HepG2 (cell line): ENCODE measurements at regions of chr1 and their contacts with region 1.

Region 1: GRCh38 chr1:150979092-150980056 is 2.7 kb upstream of the ANXA9 start:
- DNase-seq: peak; percentile 82
- ATAC-seq: peak; percentile 16
- H3K4me3 ChIP-seq: peak overlapping the region; percentile 46 to 73 (median 50)
- H3K27ac ChIP-seq: peak overlapping the region; percentile 38
- H3K4me1 ChIP-seq: peaks cover 82% of the 10 kb centered on the region
- H3K27me3 ChIP-seq: no peaks in the 10 kb centered on the region
- CTCF ChIP-seq: peak; percentile 94
- EP300 ChIP-seq: peak in 1 of 2 experiments; percentile 42; a peak in 1 of 4 replicates
- POLR2A ChIP-seq: 0 out of 4 replicates have a peak, but pooled peaks of 1 of the 2 experiments have one; percentile 26
- RAD21 ChIP-seq: peak; percentile 91

Region 2: DNA sequence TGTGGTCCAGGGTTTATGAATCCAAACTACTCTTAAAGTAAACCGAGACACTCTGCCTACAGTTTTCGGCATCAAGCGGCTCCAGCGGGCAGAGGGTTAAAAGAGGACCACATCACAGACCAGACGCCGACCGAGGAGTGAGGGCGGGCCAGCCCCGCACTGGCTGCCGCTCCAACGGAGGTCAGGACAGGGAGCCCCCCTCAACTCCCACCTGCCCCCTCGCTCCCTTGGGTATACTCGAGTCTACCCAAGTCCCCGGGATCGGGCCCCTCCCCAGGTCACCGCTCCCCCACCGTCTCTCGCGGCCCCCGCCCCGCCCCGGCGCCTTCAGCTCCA is 103.3 kb before region 1 on chr1:
- CTCF ChIA-PET with region 1: no interaction called
- POLR2A ChIA-PET with region 1: no interaction called
- in situ Hi-C with region 1: no loop called
- intact Hi-C with region 1: loop called (anchors 2 kb)
- DNase-seq: peak; percentile 63
- ATAC-seq: peak; percentile 80
- H3K4me3 ChIP-seq: peak overlapping the region; percentile 84 to 90 (median 85)
- H3K27ac ChIP-seq: peak overlapping the region; percentile 84
- H3K4me1 ChIP-seq: peaks cover 33% of the 10 kb centered on the region
- H3K27me3 ChIP-seq: no peaks in the 10 kb centered on the region; a peak in 1 of 5 replicates
- CTCF ChIP-seq: no peak
- EP300 ChIP-seq: no peak
- POLR2A ChIP-seq: no peak
- RAD21 ChIP-seq: no peak

Region 3: GRCh38 chr1:150925816-150926741 is 53.3 kb before region 1 on chr1 and contains the start of gene SETDB1:
- CTCF ChIA-PET with region 1: interaction called, 3 read pairs
- POLR2A ChIA-PET with region 1: interaction called, 17 read pairs
- in situ Hi-C with region 1: no loop called
- intact Hi-C with region 1: no loop called
- DNase-seq: peak; percentile 97
- ATAC-seq: peak; percentile 98
- H3K4me3 ChIP-seq: peak within 1 kb of the TSS; percentile 81 to 96 (median 82)
- H3K27ac ChIP-seq: peak within 1 kb of the TSS; percentile 95
- H3K4me1 ChIP-seq: peaks cover 15% of the 10 kb centered on the region
- H3K27me3 ChIP-seq: no peaks in the 10 kb centered on the region
- CTCF ChIP-seq: peak; percentile 68
- EP300 ChIP-seq: peak in 1 of 2 experiments; percentile 44; a peak in 1 of 4 replicates
- POLR2A ChIP-seq: peak; percentile 47 to 70; a peak in 3 of 4 replicates
- RAD21 ChIP-seq: no peak
- total RNA-seq, gene SETDB1: 31.0 and 34.6 TPM in 2 replicates

Region 4: DNA sequence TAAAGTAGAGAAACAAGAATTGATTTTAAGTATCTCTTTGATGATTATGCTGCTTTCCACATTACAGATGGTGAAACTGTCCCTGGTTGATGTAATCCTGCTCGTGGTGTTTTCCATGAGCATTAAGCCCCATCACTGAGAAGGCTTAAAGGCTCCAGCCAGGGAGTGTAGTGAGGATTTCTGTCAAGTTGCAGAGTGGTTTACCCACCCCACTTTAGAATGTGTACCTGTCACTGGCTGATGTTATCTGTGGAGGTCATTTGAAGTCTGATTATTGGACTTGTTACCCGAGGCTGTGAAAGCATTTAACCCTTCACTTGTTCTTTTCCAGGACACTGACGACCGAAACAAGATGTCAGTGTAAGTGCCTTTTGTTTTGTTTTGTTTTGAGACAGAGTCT is 17.6 kb before region 1 on chr1:
- CTCF ChIA-PET with region 1: interaction called, 5 read pairs
- POLR2A ChIA-PET with region 1: interaction called, 12 read pairs
- in situ Hi-C with region 1: no loop called
- intact Hi-C with region 1: no loop called
- DNase-seq: no peak
- ATAC-seq: peak; percentile 53
- H3K4me3 ChIP-seq: no peak overlapping the region
- H3K27ac ChIP-seq: no peak overlapping the region
- H3K4me1 ChIP-seq: peaks cover 12% of the 10 kb centered on the region; the same call in 1 of the 2 replicates
- H3K27me3 ChIP-seq: no peaks in the 10 kb centered on the region
- CTCF ChIP-seq: no peak
- EP300 ChIP-seq: no peak
- POLR2A ChIP-seq: no peak
- RAD21 ChIP-seq: no peak

Region 5: DNA sequence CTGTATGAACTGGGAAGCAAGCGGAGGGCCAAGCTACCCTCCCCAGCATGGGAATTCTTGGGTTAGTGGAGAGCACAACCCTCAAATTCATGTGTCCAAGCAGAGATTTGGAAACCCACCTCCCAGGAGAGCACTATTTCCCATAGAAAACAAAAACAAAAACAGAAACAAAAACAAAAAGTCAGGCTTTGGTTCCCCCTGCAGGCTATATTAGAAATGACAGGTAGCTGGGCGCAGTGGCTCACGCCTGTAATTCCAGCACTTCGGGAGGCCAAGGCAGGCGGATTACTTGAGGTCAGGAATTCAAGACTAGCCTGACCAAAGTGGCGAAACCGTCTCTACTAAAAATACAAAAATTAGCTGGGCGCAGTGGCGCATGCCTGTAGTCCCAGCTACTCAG is 16.5 kb after region 1 on chr1:
- CTCF ChIA-PET with region 1: interaction called, 24 read pairs
- POLR2A ChIA-PET with region 1: interaction called, 150 read pairs
- in situ Hi-C with region 1: no loop called
- intact Hi-C with region 1: no loop called
- DNase-seq: no peak
- ATAC-seq: peak; percentile 52
- H3K4me3 ChIP-seq: no peak overlapping the region
- H3K27ac ChIP-seq: no peak overlapping the region
- H3K4me1 ChIP-seq: peaks cover 20% of the 10 kb centered on the region
- H3K27me3 ChIP-seq: no peaks in the 10 kb centered on the region
- CTCF ChIP-seq: peak; percentile 73
- EP300 ChIP-seq: no peak
- POLR2A ChIP-seq: no peak
- RAD21 ChIP-seq: peak; percentile 66

Region 6: GRCh38 chr1:151008190-151008860 is 29.0 kb after region 1 on chr1 and contains the start of gene PRUNE1:
- CTCF ChIA-PET with region 1: interaction called, 22 read pairs
- POLR2A ChIA-PET with region 1: interaction called, 150 read pairs
- in situ Hi-C with region 1: no loop called
- intact Hi-C with region 1: loop called (anchors 1 kb)
- DNase-seq: peak; percentile 95
- ATAC-seq: peak; percentile 55
- H3K4me3 ChIP-seq: peak within 1 kb of the TSS; percentile 66 to 99 (median 91)
- H3K27ac ChIP-seq: peak within 1 kb of the TSS; percentile 100
- H3K4me1 ChIP-seq: peaks cover 77% of the 10 kb centered on the region
- H3K27me3 ChIP-seq: no peaks in the 10 kb centered on the region; a peak in 1 of 5 replicates
- CTCF ChIP-seq: no peak
- EP300 ChIP-seq: peak in 1 of 2 experiments; percentile 39; a peak in 2 of 4 replicates
- POLR2A ChIP-seq: peak; percentile 32 to 77
- RAD21 ChIP-seq: 0 out of 2 replicates have a peak, but pooled peaks have one; percentile 4
- total RNA-seq, gene PRUNE1: 19.0 and 26.2 TPM in 2 replicates

Region 7: GRCh38 chr1:151013518-151013917 is 34.1 kb after region 1 on chr1:
- CTCF ChIA-PET with region 1: interaction called, 6 read pairs
- POLR2A ChIA-PET with region 1: interaction called, 19 read pairs
- in situ Hi-C with region 1: no loop called
- intact Hi-C with region 1: loop called (anchors 5 kb)
- DNase-seq: peak; percentile 68
- ATAC-seq: peak; percentile 58
- H3K4me3 ChIP-seq: peak overlapping the region; percentile 18 to 44 (median 39); a peak in 4 of 6 replicates
- H3K27ac ChIP-seq: peak overlapping the region; percentile 99
- H3K4me1 ChIP-seq: peaks cover 61% of the 10 kb centered on the region
- H3K27me3 ChIP-seq: no peaks in the 10 kb centered on the region; a peak in 1 of 5 replicates
- CTCF ChIP-seq: no peak
- EP300 ChIP-seq: no peak
- POLR2A ChIP-seq: no peak
- RAD21 ChIP-seq: no peak